Transverse colon (tissue), 4 donors: ENCODE measurements at regions of chr4 and their contacts with region 1.

Region 1: GRCh38 chr4:187692626-187693025 is 302.9 kb upstream of the ZFP42 start:
- DNase-seq: no peak
- H3K4me3 ChIP-seq: no peak overlapping the region
- H3K27ac ChIP-seq: no peak overlapping the region
- H3K4me1 ChIP-seq: no peaks in the 10 kb centered on the region
- H3K27me3 ChIP-seq: no peaks in the 10 kb centered on the region
- CTCF ChIP-seq: no peak
- EP300 ChIP-seq: no peak
- POLR2A ChIP-seq: no peak

Region 2: DNA sequence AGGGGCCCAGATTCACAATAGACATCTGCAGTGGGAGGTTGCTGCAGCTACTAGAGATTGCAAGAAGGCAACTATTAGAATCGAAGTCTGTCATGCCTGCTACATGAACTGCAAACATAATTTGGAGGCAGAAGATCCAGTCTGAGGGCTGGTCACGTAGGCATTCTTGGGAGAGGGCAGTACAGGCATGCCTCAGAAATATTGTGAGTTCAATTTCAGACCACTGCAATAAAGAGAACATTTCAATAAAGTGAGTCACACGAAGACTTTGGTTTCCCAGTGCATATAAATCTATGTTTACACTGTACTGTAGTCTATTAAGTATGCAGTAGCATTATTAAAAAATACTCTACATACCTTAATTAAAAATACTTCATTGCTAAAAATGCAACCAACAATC is 383.2 kb before region 1 on chr4:
- in situ Hi-C with region 1: no loop called
- intact Hi-C with region 1: loop called (anchors 5 kb)
- DNase-seq: no peak
- H3K4me3 ChIP-seq: no peak overlapping the region
- H3K27ac ChIP-seq: no peak overlapping the region
- H3K4me1 ChIP-seq: no peaks in the 10 kb centered on the region
- H3K27me3 ChIP-seq: no peaks in the 10 kb centered on the region
- CTCF ChIP-seq: no peak
- EP300 ChIP-seq: no peak
- POLR2A ChIP-seq: no peak

Region 3: GRCh38 chr4:187744911-187745310 is 52.3 kb after region 1 on chr4:
- in situ Hi-C with region 1: no loop called
- intact Hi-C with region 1: no loop called
- DNase-seq: no peak
- H3K4me3 ChIP-seq: no peak overlapping the region
- H3K27ac ChIP-seq: no peak overlapping the region
- H3K4me1 ChIP-seq: no peaks in the 10 kb centered on the region
- H3K27me3 ChIP-seq: no peaks in the 10 kb centered on the region
- CTCF ChIP-seq: no peak
- EP300 ChIP-seq: no peak
- POLR2A ChIP-seq: no peak